ENCODE measurements at regions of chr1 and their contacts with region 1.

Region 1: DNA sequence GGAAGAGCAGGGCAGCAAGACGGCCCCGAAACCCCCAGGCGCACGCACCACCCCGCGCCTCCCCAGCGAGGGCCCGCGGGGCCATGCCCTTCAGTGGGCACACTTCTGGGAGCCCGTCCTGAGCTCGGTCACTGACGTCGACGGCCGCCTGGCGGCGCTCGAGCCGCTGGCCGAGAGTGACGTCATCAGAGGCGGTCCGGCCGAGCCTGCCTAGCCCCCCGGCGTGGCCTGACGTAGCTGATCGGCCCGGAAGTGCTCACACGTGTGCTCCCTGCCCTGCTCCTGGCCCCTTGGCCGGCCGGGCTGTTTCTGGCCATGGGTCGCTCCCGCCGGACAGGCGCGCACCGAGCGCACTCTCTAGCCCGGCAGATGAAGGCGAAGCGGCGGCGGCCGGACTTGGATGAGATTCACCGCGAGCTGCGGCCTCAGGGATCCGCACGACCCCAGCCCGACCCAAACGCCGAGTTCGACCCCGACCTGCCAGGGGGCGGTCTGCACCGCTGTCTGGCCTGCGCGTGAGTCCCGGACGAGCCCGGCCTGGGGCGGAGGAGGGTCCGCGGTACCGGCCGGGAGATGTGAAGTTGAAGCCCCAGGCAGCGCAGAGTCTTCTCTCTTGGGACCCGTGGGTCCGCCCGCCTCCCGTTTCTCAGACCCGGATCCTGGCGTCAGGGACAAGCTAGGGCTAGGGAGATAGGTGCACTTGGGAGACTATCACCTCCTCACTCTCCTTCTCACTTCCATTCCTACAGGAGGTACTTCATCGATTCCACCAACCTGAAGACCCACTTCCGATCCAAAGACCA is at the start of gene ZNF593:
- DNase-seq: peak; percentile 61
- ATAC-seq: peak; percentile 97
- H3K4me3 ChIP-seq: peak within 1 kb of the TSS; percentile 87 to 95
- H3K27ac ChIP-seq: peak within 1 kb of the TSS; percentile 93
- H3K4me1 ChIP-seq: peaks cover 17% of the 10 kb centered on the region
- H3K27me3 ChIP-seq: no peaks in the 10 kb centered on the region
- CTCF ChIP-seq: peak; percentile 98
- total RNA-seq, gene ZNF593: 108 TPM

Region 2: GRCh38 chr1:26336477-26337205 is 166.8 kb after region 1 on chr1:
- CTCF ChIA-PET with region 1: no interaction called
- POLR2A ChIA-PET with region 1: no interaction called
- in situ Hi-C with region 1: no loop called
- intact Hi-C with region 1: no loop called
- DNase-seq: no peak
- ATAC-seq: peak; percentile 95
- H3K4me3 ChIP-seq: peak overlapping the region; percentile 55 to 73
- H3K27ac ChIP-seq: no peak overlapping the region; the same call in 1 of the 2 replicates
- H3K4me1 ChIP-seq: no peaks in the 10 kb centered on the region
- H3K27me3 ChIP-seq: no peaks in the 10 kb centered on the region
- CTCF ChIP-seq: no peak

Region 3: DNA sequence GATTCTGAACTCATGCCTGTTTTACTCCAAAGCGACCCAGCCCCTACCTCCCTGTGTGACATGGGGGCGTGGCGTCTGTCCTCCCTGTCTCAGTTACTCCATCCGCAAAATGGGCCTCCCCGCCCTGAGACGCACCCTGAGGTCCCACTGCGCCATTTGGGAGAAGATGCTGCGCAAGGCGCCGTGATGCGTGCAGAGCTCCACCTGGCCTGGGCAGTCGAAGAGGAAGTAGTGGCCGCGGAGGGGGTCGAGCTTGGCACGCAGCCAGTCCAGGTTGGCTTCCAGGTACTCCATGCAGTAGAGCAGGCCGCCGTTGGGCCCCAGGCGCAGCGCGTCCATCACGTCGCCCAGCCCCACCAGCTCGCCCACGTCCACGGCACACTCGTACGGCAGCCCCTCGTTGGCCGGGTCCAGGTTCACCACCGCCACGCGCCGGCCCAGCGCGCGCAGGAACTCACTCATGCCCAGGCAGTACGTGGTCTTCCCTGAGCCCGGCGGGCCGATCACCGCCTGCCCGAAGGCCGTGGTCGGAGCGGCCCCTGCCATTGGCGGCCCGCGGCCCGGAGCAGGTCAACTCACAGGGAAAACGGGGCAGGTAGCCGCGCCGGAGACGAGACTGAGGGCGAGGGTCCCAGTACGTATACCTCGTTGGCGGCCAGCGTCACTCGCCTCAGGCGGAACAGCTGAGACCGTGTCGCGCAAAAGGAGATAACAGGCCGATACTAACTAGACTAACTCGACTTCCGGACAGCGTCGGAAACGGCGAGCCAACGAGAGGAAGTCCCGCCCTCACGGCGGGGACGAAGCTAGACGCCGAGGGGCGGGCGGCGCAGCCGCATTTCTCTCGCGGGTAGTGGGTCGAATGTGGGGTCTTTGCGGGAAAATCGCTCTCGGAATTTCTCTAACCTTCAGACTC is 719.9 kb after region 1 on chr1 and contains the start of gene GPN2:
- CTCF ChIA-PET with region 1: no interaction called
- POLR2A ChIA-PET with region 1: interaction called, 13 read pairs
- in situ Hi-C with region 1: no loop called
- intact Hi-C with region 1: no loop called
- DNase-seq: no peak
- ATAC-seq: peak; percentile 95
- H3K4me3 ChIP-seq: peak within 1 kb of the TSS; percentile 82 to 95
- H3K27ac ChIP-seq: peak within 1 kb of the TSS; percentile 95
- H3K4me1 ChIP-seq: peaks cover 17% of the 10 kb centered on the region
- H3K27me3 ChIP-seq: no peaks in the 10 kb centered on the region
- CTCF ChIP-seq: no peak
- total RNA-seq, gene GPN2: 41.9 TPM